ENCODE measurements at regions of chr3 and their contacts with region 1.

Region 1: GRCh38 chr3:19946832-19947548 is at the start of gene RAB5A:
- DNase-seq: peak; percentile 99
- H3K4me3 ChIP-seq: peak within 1 kb of the TSS; percentile 70 to 100 (median 94)
- H3K27ac ChIP-seq: peak within 1 kb of the TSS; percentile 94 to 100 (median 98)
- H3K4me1 ChIP-seq: peaks cover 0 to 37% (median 18%) of the 10 kb centered on the region in 4 donors
- H3K27me3 ChIP-seq: no peaks in the 10 kb centered on the region
- CTCF ChIP-seq: no peak
- EP300 ChIP-seq: peak in 2 of 4 donors; percentile 64 to 84
- POLR2A ChIP-seq: peak; percentile 67 to 75
- total RNA-seq, gene RAB5A: 61.4 to 65.3 (median 64.1) TPM

Region 2: GRCh38 chr3:19688767-19689166 is 258.2 kb before region 1 on chr3:
- intact Hi-C with region 1: no loop called
- DNase-seq: no peak
- H3K4me3 ChIP-seq: no peak overlapping the region
- H3K27ac ChIP-seq: no peak overlapping the region
- H3K4me1 ChIP-seq: no peaks in the 10 kb centered on the region
- H3K27me3 ChIP-seq: no peaks in the 10 kb centered on the region
- CTCF ChIP-seq: no peak
- EP300 ChIP-seq: no peak
- POLR2A ChIP-seq: no peak

Region 3: GRCh38 chr3:19866751-19867347 is 80.1 kb before region 1 on chr3:
- intact Hi-C with region 1: no loop called
- DNase-seq: no peak
- H3K4me3 ChIP-seq: no peak overlapping the region
- H3K27ac ChIP-seq: no peak overlapping the region
- H3K4me1 ChIP-seq: no peaks in the 10 kb centered on the region
- H3K27me3 ChIP-seq: no peaks in the 10 kb centered on the region
- CTCF ChIP-seq: peak; percentile 47 to 70 (median 60)
- EP300 ChIP-seq: no peak
- POLR2A ChIP-seq: no peak

Region 4: DNA sequence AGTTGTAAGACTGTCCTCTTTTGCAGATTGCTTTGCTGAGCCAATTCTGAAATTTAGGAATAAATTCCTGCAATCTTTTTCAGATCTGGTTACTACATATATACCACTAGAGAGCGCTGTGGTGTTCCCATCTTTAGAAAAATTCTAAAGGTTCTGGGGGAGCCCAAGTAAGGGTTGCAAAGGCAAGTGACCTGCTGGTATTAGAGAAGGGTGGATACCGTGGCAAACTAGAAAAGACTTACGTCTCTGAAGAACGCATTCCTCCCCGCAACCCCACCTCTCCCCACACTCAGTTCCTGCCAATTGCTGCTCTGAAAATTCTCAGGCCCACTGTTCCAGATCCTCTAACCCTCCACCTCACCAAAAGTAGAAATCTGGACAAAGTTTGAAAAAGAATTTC is 61.5 kb before region 1 on chr3:
- intact Hi-C with region 1: loop called (anchors 5 kb)
- DNase-seq: no peak
- H3K4me3 ChIP-seq: no peak overlapping the region
- H3K27ac ChIP-seq: no peak overlapping the region
- H3K4me1 ChIP-seq: peaks cover 0 to 18% (median 12%) of the 10 kb centered on the region in 4 donors
- H3K27me3 ChIP-seq: no peaks in the 10 kb centered on the region
- CTCF ChIP-seq: peak in 2 of 4 experiments; percentile 12 to 45
- EP300 ChIP-seq: no peak
- POLR2A ChIP-seq: no peak

Region 5: DNA sequence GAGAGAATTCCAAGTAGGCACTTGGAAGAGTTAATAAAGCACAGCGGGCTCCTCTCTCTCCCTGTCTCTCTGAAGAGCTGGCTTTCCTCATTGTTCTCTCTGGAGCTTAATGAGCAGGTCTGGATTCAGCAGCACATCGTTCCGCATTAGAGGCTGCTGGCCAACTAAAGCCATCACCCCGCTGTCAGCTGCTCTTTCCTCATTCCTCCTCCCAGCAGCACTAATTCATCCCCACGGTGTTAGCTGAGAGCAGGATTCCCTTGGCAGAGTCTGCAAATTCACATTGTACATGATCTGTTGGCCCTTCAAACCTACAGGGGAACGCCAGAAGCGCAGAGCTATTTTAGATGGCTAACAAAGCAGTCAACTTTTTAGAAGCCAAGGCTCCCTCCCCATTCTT is 194.9 kb after region 1 on chr3:
- intact Hi-C with region 1: loop called (anchors 5 kb)
- DNase-seq: peak; percentile 89
- H3K4me3 ChIP-seq: no peak overlapping the region
- H3K27ac ChIP-seq: peak overlapping the region; percentile 43 to 80 (median 61)
- H3K4me1 ChIP-seq: peaks cover 0 to 32% (median 29%) of the 10 kb centered on the region in 4 donors
- H3K27me3 ChIP-seq: no peaks in the 10 kb centered on the region
- CTCF ChIP-seq: peak in 2 of 4 experiments; percentile 25 to 33
- EP300 ChIP-seq: peak in 1 of 4 donors; percentile 73
- POLR2A ChIP-seq: no peak

Region 6: DNA sequence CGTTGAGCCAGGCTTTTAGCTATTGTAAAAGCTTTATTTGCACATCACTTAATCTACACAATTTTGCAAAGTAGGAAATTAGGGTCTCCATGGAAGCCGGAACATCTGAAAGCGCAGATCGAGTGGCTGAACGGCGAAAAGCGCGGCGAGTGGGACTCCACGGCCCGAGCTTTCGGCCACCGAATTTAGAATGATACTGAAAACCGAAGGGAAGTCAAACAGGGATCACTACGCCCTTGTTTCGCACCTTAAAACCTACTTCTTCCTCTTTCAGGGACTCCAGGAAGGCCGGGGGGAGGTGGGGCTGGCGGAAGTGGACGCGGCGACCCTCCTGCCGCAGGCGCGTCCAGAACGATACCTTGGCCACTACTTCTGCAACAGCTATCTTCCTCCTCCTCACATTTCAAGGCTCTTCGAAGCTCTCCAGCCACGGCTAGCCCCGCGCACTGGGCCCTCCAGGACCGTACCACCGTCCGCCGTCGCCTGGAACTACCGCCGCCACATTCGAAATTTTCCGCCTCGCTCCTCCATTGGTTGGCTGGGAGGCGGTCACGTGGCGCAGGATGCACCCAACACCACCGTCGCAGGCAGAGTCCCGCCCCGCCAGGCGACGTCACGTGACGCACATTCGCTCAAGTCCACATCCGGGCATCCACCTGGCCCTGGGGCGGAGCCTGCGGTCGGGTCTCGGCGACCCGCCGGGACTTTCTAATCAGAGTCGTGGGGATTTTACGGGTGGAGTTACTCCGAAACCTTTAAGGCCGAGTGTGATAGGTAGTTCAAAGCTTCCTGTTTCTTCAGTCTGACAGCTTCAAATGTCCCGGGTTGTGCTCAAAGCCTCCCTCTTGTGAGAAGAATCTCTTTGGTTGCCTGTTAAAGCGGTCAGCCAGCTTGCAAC is 239.0 kb after region 1 on chr3 and contains the start of gene SGO1:
- intact Hi-C with region 1: loop called (anchors 2 kb)
- DNase-seq: peak; percentile 99
- H3K4me3 ChIP-seq: peak within 1 kb of the TSS; percentile 53 to 69 (median 63)
- H3K27ac ChIP-seq: peak within 1 kb of the TSS; percentile 86 to 91 (median 87)
- H3K4me1 ChIP-seq: peaks cover 0 to 18% (median 11%) of the 10 kb centered on the region in 4 donors
- H3K27me3 ChIP-seq: no peaks in the 10 kb centered on the region
- CTCF ChIP-seq: no peak
- EP300 ChIP-seq: peak in 1 of 4 donors; percentile 42
- POLR2A ChIP-seq: peak; percentile 79 to 89
- total RNA-seq, gene SGO1: 0.16 to 1.4 TPM in 2 of 4 donors, not detected in the others

Measured in sigmoid colon (tissue), 7 donors.